OCI-LY7 (cell line): ENCODE measurements at regions of chr12 and their contacts with region 1.

Region 1: GRCh38 chr12:92445253-92446082 is 257.3 kb upstream of the PLEKHG7 start:
- DNase-seq: peak; percentile 98
- H3K4me3 ChIP-seq: peak overlapping the region; percentile 58
- H3K27ac ChIP-seq: peak overlapping the region; percentile 99
- H3K4me1 ChIP-seq: peaks cover 65% of the 10 kb centered on the region
- CTCF ChIP-seq: no peak

Region 2: GRCh38 chr12:92331383-92331782 is 114.1 kb before region 1 on chr12:
- CTCF ChIA-PET with region 1: no interaction called
- POLR2A ChIA-PET with region 1: no interaction called
- intact Hi-C with region 1: no loop called
- DNase-seq: no peak
- H3K4me3 ChIP-seq: no peak overlapping the region
- H3K27ac ChIP-seq: no peak overlapping the region
- H3K4me1 ChIP-seq: peaks cover 10% of the 10 kb centered on the region
- CTCF ChIP-seq: no peak

Region 3: GRCh38 chr12:92431146-92431545 is 14.3 kb before region 1 on chr12:
- CTCF ChIA-PET with region 1: interaction called, 5 read pairs
- POLR2A ChIA-PET with region 1: interaction called, 19 read pairs
- intact Hi-C with region 1: no loop called
- DNase-seq: peak; percentile 68
- H3K4me3 ChIP-seq: no peak overlapping the region
- H3K27ac ChIP-seq: peak overlapping the region; percentile 6
- H3K4me1 ChIP-seq: peaks cover 51% of the 10 kb centered on the region
- CTCF ChIP-seq: peak; percentile 68

Region 4: DNA sequence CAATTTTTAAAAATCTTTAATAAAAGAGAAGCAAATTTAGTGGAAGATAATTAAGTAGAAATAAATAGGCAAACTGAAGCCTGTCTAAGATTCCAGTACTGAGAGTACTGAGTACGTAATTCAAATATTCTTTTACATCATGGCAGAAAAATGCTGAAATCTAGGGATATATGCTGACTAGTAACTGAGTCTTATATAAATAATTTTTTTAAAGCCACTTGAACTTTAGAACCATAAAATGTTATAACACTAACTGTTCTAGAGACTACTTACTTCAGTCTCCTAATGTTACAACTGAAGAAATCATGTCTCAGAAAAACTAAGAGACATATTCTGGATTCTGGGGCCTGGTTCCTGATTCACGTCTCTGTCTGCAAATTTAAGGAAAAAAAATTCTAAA is 26.7 kb after region 1 on chr12:
- CTCF ChIA-PET with region 1: no interaction called
- POLR2A ChIA-PET with region 1: interaction called, 48 read pairs
- intact Hi-C with region 1: loop called (anchors 1 kb)
- DNase-seq: no peak
- H3K4me3 ChIP-seq: peak overlapping the region; percentile 70
- H3K27ac ChIP-seq: peak overlapping the region; percentile 98
- H3K4me1 ChIP-seq: peaks cover 69% of the 10 kb centered on the region
- CTCF ChIP-seq: no peak

Region 5: DNA sequence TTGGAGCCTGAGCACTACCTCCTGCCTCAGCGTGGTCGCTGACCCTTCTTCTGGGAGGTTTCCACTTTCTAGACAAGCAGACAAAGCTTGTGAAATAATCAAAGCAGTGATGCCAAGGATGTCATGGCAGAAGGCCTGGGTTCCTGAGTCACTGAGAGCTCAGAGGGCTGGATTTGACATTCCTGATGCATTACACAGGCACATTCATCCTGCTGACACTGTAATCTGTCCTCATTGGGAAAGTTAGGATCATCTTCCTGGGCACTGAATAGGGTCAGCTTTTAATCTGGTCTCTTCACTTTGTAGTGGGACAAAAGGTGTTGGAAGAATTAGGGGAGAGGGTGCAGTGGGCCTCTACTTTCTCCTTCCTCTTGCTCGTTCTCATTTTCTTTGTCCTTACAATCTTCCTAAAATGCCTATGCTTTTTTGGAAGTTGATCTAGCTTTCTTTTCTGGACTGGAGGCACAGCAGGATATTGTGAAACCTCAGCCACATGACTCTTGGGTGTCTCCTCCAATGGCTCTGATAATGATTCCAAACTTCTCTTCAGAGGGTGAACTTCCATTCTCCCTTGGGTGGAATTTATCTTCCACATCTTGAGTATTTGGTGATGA is 454.0 kb after region 1 on chr12:
- CTCF ChIA-PET with region 1: no interaction called
- POLR2A ChIA-PET with region 1: no interaction called
- intact Hi-C with region 1: no loop called
- DNase-seq: no peak
- H3K4me3 ChIP-seq: no peak overlapping the region
- H3K27ac ChIP-seq: no peak overlapping the region
- H3K4me1 ChIP-seq: no peaks in the 10 kb centered on the region
- CTCF ChIP-seq: no peak